Prostate gland (tissue), 2 donors: ENCODE measurements at regions of chr1 and their contacts with region 1.

Region 1: DNA sequence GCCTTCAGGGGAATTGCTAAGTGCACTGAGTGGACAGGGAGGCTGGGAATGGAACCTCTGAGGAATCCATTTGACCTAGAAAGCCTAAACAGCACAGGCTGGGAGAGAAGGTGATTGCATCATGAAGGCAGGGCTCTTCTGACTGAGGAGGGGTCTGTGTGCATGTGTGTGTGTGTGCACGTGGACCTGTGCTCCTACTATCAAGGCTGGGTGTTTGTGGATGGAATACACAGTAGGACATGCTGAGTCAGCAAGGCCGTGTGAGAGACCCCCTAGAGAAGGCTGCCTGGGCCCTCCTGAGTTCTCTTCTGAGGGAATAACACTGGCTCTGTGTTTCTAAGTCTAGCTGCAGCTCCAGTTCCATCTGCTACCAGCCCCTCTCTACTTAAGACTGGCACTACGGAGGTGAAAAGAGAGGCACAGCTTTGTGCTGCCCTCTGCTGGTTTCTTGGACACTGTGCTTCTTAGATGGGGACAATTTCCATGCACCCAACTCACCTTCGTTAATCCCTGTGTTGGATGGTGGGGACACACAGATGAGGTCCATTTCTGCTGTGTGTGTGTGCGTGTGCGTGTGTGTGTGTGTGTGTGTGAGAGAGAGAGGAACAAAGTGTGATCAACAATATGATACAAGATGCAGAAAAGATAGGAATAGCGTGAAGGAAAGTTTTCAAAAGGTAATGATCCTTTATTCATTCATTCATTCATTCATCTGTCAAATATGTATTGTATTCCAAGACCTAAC is 6.2 kb upstream of the EFCAB14 start:
- DNase-seq: peak; percentile 79
- H3K4me3 ChIP-seq: no peak overlapping the region
- H3K27ac ChIP-seq: no peak overlapping the region
- H3K4me1 ChIP-seq: no peaks in the 10 kb centered on the region
- H3K27me3 ChIP-seq: no peaks in the 10 kb centered on the region
- CTCF ChIP-seq: peak; percentile 42 to 89 (median 80)
- POLR2A ChIP-seq: no peak

Region 2: GRCh38 chr1:46406881-46407608 is 318.1 kb before region 1 on chr1:
- intact Hi-C with region 1: loop called (anchors 5 kb)
- DNase-seq: no peak
- H3K4me3 ChIP-seq: no peak overlapping the region
- H3K27ac ChIP-seq: no peak overlapping the region
- H3K4me1 ChIP-seq: peaks cover 2% of the 10 kb centered on the region
- H3K27me3 ChIP-seq: no peaks in the 10 kb centered on the region
- CTCF ChIP-seq: no peak
- POLR2A ChIP-seq: no peak

Region 3: GRCh38 chr1:46714991-46715390 is 10.2 kb before region 1 on chr1:
- intact Hi-C with region 1: no loop called
- DNase-seq: no peak
- H3K4me3 ChIP-seq: no peak overlapping the region
- H3K27ac ChIP-seq: no peak overlapping the region
- H3K4me1 ChIP-seq: peaks cover 8% of the 10 kb centered on the region
- H3K27me3 ChIP-seq: no peaks in the 10 kb centered on the region
- CTCF ChIP-seq: no peak
- POLR2A ChIP-seq: no peak